Ovary (tissue), 10 donors: ENCODE measurements at regions of chr5 and their contacts with region 1.

Region 1: GRCh38 chr5:157820593-157821252 is 38.2 kb downstream of the CLINT1 start:
- DNase-seq: peak in 1 of 5 donors; percentile 28
- H3K4me3 ChIP-seq: no peak overlapping the region
- H3K27ac ChIP-seq: peak overlapping the region in 1 of 2 donors; percentile 4
- H3K4me1 ChIP-seq: peaks cover 8% of the 10 kb centered on the region
- H3K27me3 ChIP-seq: no peaks in the 10 kb centered on the region
- CTCF ChIP-seq: peak; percentile 21 to 61 (median 43)
- EP300 ChIP-seq: no peak
- POLR2A ChIP-seq: no peak

Region 2: GRCh38 chr5:157778121-157778805 is 42.5 kb before region 1 on chr5:
- intact Hi-C with region 1: no loop called
- DNase-seq: no peak
- H3K4me3 ChIP-seq: no peak overlapping the region
- H3K27ac ChIP-seq: no peak overlapping the region
- H3K4me1 ChIP-seq: no peaks in the 10 kb centered on the region
- H3K27me3 ChIP-seq: no peaks in the 10 kb centered on the region
- CTCF ChIP-seq: no peak
- EP300 ChIP-seq: no peak
- POLR2A ChIP-seq: no peak

Region 3: GRCh38 chr5:157948738-157949410 is 128.2 kb after region 1 on chr5:
- intact Hi-C with region 1: loop called in 1 of 4 experiments (anchors 10 kb)
- DNase-seq: peak; percentile 79 to 88 (median 82)
- H3K4me3 ChIP-seq: no peak overlapping the region
- H3K27ac ChIP-seq: no peak overlapping the region
- H3K4me1 ChIP-seq: peaks cover 1% of the 10 kb centered on the region
- H3K27me3 ChIP-seq: no peaks in the 10 kb centered on the region
- CTCF ChIP-seq: peak; percentile 45 to 73 (median 54)
- EP300 ChIP-seq: no peak
- POLR2A ChIP-seq: no peak

Region 4: DNA sequence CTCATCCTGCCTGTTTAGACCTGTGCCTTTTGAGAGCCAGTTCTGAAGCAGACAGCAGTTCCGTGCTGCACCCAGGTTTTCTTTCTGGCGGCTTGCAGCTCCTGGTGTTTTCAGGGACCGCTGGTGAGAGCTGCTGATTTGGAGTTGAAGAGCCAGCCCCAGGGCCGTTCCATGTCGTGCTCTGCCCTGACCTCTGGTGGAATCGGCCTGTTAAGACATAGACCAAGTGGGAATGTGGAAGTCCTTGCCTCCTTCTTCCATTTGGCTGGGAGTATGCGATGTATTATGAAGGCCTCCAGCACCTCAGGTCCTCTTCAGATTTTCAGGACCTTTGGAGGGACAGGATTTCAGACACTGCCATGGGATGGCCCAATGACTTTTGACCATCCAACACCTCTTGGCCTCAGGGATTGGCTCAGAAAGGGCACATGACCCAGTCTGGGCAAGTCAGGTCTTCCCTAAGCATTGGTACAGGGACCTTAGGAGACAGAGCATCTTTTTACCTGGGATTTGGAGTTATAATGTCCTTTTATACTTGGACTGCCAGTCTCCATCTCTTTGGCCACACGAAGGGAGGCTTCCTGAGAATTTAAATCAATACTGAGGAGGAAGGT is 174.3 kb after region 1 on chr5:
- intact Hi-C with region 1: loop called in 1 of 4 experiments (anchors 10 kb)
- DNase-seq: peak; percentile 25 to 70 (median 51)
- H3K4me3 ChIP-seq: no peak overlapping the region
- H3K27ac ChIP-seq: no peak overlapping the region
- H3K4me1 ChIP-seq: no peaks in the 10 kb centered on the region
- H3K27me3 ChIP-seq: no peaks in the 10 kb centered on the region
- CTCF ChIP-seq: peak in 1 of 3 donors; percentile 23
- EP300 ChIP-seq: no peak
- POLR2A ChIP-seq: no peak

Region 5: DNA sequence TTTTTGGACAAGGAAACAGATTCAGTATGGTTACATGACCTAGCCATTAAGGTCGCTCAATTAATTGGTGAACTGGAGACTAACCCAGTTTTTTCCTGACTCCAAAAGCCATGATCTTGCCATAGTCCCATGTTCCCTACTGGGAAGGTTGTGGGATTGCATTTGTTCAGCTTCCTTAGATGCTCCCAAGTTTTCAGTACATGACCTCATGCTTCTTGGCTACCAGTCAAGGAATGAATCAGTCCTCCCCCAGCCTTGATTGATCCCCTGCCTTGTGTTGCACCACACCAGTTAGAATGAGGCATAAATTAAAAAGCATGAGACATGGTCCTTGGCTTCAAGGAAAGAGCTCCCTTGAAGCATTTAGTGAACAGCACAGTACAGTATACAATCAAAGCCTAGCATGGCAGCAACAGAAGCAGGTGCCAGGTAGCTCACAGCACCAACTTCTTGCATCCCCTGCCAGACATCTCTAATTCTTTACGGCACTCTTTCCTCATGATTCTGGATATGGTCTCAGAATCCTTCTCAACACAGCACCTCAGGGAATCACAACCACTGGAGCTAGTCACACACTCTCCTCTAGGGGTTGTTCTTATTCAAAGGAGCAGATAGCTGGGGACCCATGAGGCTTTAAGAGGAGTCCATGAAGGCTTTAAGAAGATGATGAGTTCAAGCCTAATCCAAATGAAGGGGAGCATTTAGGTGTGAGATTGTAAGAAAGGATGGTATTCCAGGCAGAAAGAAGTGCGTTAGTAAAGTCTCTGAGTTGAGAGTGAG is 333.7 kb after region 1 on chr5:
- intact Hi-C with region 1: no loop called
- DNase-seq: peak in 1 of 5 donors; percentile 48
- H3K4me3 ChIP-seq: no peak overlapping the region
- H3K27ac ChIP-seq: no peak overlapping the region
- H3K4me1 ChIP-seq: no peaks in the 10 kb centered on the region
- H3K27me3 ChIP-seq: no peaks in the 10 kb centered on the region
- CTCF ChIP-seq: no peak
- EP300 ChIP-seq: no peak
- POLR2A ChIP-seq: no peak

Region 6: DNA sequence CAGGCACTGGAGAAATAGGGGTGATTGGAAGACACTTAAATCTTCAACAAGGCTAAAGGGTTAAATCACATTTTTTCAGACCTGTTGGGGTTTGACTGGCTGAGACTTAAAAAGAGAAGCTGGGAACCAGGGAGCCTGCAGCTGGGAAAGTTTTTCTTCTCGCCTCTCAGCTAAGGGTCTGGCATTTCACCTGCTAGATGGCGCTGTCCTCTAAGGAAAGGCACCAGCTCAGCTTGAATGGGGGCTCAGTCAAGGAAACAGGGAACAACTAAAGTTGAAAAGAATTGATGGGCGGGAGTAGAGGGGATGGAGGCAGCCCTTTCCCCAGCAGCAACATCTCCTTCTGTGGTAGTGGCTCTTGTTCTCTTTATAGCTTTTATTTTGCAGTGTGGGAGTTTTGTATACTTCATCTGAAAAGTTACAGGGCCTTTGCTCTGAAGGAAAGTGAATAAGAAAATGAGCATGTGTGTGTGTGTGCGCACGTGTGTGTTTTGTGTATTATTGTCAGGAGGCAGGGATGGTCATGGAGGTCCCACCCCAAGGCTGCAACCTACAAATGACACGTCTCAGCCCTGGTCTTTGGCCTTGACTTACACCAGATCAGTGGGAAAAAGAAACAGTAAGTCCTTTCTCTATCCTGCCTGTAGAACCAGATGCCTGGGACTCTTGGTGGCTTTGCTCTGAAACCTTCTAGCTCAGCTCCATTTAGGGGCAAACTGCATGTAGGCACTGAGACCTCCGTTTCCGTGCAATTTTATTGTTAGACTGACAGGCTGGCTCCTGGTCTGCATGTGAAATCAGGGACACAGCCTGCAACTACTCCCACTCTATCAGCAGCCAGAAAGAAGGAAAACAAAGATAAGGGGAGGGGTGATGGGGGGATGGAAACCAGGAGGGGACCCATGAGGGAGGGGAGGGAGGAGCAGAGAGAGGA is 354.5 kb after region 1 on chr5:
- intact Hi-C with region 1: loop called in 1 of 4 experiments (anchors 10 kb)
- DNase-seq: peak; percentile 83 to 90 (median 83)
- H3K4me3 ChIP-seq: no peak overlapping the region
- H3K27ac ChIP-seq: peak overlapping the region in 1 of 2 donors; percentile 1
- H3K4me1 ChIP-seq: peaks cover 4% of the 10 kb centered on the region
- H3K27me3 ChIP-seq: no peaks in the 10 kb centered on the region
- CTCF ChIP-seq: peak; percentile 58 to 91 (median 78)
- EP300 ChIP-seq: no peak
- POLR2A ChIP-seq: no peak

Region 7: GRCh38 chr5:159301346-159301911 is 1480.7 kb after region 1 on chr5:
- intact Hi-C with region 1: no loop called
- DNase-seq: no peak
- H3K4me3 ChIP-seq: no peak overlapping the region
- H3K27ac ChIP-seq: no peak overlapping the region
- H3K4me1 ChIP-seq: no peaks in the 10 kb centered on the region
- H3K27me3 ChIP-seq: no peaks in the 10 kb centered on the region
- CTCF ChIP-seq: no peak
- EP300 ChIP-seq: no peak
- POLR2A ChIP-seq: no peak